ENCODE measurements at regions of chr12 and their contacts with region 1.

Region 1: DNA sequence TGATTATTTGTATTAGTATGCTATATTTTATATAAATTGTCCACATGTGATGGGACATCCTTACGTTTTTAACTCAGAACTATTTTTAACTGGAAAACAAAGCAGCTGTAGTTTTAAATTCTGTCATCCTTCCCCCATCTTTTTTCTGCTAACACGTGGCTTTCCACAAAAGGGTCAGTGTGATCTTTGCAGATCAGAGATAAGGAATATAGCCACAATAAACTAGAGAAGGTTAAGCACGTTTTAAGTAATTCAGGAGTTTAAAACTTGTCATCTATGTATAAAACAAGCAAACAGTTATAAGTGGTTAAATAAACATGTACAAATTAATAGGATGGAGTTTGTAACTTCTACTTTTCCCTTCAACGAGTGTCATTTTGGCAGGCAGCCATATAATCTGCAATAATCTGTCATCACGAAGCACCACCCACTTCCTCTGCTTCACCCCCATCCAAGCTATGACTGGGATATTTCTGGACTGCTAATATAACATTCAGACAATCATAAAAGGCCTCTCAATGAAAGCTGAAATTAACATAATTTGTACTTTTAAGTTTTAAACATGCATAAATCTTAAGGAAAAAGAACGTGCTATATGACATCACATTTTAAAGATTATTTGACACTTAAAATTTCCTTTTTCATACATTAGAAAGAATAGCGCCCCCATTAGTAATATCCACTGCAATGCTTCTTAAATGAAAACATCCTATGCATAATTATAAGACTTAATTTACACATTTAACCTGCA is 15.3 kb downstream of the TAOK3 start:
- ATAC-seq: peak in 3 of 8 experiments; percentile 43 to 67 (median 59)
- H3K4me3 ChIP-seq: no peak overlapping the region
- H3K27ac ChIP-seq: no peak overlapping the region
- H3K4me1 ChIP-seq: peaks cover 0 to 4% of the 10 kb centered on the region in 2 donors

Region 2: GRCh38 chr12:118219772-118220171 is 137.7 kb before region 1 on chr12:
- in situ Hi-C with region 1: loop called in 2 of 9 experiments (anchors 10 to 25 kb)
- ATAC-seq: no peak
- H3K4me3 ChIP-seq: no peak overlapping the region
- H3K27ac ChIP-seq: no peak overlapping the region
- H3K4me1 ChIP-seq: no peaks in the 10 kb centered on the region

Region 3: GRCh38 chr12:118456741-118457140 is 99.3 kb after region 1 on chr12:
- in situ Hi-C with region 1: no loop called
- ATAC-seq: no peak
- H3K4me3 ChIP-seq: no peak overlapping the region
- H3K27ac ChIP-seq: no peak overlapping the region
- H3K4me1 ChIP-seq: no peaks in the 10 kb centered on the region